Activated CD4-positive, alpha-beta T cell treated with anti-CD3 and anti-CD28 coated beads for 36 hours (primary cell): ENCODE measurements at regions of chr1 and their contacts with region 1.

Region 1: GRCh38 chr1:203290261-203291089 is 14.8 kb upstream of the BTG2 start:
- DNase-seq: peak; percentile 99
- ATAC-seq: peak; percentile 50
- H3K4me3 Mint-ChIP-seq: peak overlapping the region; percentile 78
- H3K27ac Mint-ChIP-seq: peak overlapping the region; percentile 98
- H3K4me1 Mint-ChIP-seq: peaks cover 83% of the 10 kb centered on the region
- H3K27me3 Mint-ChIP-seq: no peaks in the 10 kb centered on the region

Region 2: DNA sequence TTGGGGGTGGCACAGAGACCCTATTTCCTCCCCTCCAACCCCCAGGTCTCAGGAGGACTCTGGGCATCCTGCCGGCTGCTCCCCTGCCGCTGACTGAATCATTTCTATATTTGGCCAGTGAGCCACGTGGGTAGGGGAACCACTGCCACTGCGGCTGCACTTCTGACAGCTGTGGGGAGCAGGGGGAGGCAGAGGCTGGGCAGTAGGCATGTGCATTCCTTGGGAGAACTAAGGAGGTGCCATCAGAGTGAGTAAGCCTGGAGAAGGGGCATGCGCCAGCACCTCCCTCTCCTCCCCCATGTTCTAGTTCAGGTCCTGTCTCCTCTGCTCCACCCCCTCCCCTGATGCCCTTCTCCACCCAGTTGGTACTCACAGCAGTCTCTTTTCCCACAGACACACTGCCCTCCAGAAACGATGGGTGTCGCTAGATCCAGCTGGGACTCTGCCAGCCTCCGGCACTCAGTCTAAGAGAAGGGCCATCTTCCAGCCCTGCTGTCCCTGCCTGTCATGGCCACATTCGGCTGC is 252.2 kb before region 1 on chr1:
- CTCF ChIA-PET with region 1: no interaction called
- POLR2A ChIA-PET with region 1: no interaction called
- intact Hi-C with region 1: no loop called
- DNase-seq: peak; percentile 24
- ATAC-seq: no peak
- H3K4me3 Mint-ChIP-seq: no peak overlapping the region
- H3K27ac Mint-ChIP-seq: no peak overlapping the region
- H3K4me1 Mint-ChIP-seq: peaks cover 4% of the 10 kb centered on the region
- H3K27me3 Mint-ChIP-seq: peaks cover 4% of the 10 kb centered on the region

Region 3: GRCh38 chr1:203304919-203305808 is 14.7 kb after region 1 on chr1 and contains the start of gene BTG2:
- CTCF ChIA-PET with region 1: interaction called, 33 read pairs
- POLR2A ChIA-PET with region 1: interaction called, 207 read pairs
- intact Hi-C with region 1: loop called (anchors 1 kb)
- DNase-seq: peak; percentile 96
- ATAC-seq: peak; percentile 88
- H3K4me3 Mint-ChIP-seq: peak within 1 kb of the TSS; percentile 98
- H3K27ac Mint-ChIP-seq: peak within 1 kb of the TSS; percentile 97
- H3K4me1 Mint-ChIP-seq: peaks cover 54% of the 10 kb centered on the region
- H3K27me3 Mint-ChIP-seq: no peaks in the 10 kb centered on the region
- total RNA-seq, gene BTG2: 114 to 142 TPM

Region 4: GRCh38 chr1:203320591-203321272 is 30.3 kb after region 1 on chr1:
- CTCF ChIA-PET with region 1: interaction called, 12 read pairs
- POLR2A ChIA-PET with region 1: interaction called, 28 read pairs
- intact Hi-C with region 1: no loop called
- DNase-seq: peak; percentile 71
- ATAC-seq: peak; percentile 65
- H3K4me3 Mint-ChIP-seq: peak overlapping the region; percentile 29
- H3K27ac Mint-ChIP-seq: peak overlapping the region; percentile 80
- H3K4me1 Mint-ChIP-seq: peaks cover 77% of the 10 kb centered on the region
- H3K27me3 Mint-ChIP-seq: no peaks in the 10 kb centered on the region